PC-9 (cell line): ENCODE measurements at regions of chr13 and their contacts with region 1.

Region 1: DNA sequence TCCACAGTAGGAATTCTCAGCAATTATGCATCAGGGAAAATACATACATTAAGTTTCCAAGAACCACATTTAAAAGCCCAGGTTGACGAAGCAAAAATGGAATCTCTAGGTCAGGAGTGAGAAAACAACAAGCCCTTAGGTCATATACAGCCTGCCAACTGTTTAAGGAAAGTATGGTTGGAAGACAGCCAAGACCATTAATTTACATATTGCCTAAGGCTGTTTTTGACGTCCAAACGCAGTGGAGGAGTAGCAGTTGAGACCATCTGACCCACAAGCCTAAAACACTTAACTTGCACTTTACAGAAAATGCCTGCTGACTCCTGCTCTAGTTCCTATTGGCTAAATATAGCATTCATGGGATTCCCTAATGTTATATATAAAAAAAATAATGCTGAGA is 299.0 kb downstream of the ITGBL1 start:
- DNase-seq: peak; percentile 38 to 89
- H3K4me3 ChIP-seq: no peak overlapping the region
- H3K27ac ChIP-seq: no peak overlapping the region
- H3K4me1 ChIP-seq: peaks cover 16% of the 10 kb centered on the region
- H3K27me3 ChIP-seq: no peaks in the 10 kb centered on the region
- CTCF ChIP-seq: no peak

Region 2: DNA sequence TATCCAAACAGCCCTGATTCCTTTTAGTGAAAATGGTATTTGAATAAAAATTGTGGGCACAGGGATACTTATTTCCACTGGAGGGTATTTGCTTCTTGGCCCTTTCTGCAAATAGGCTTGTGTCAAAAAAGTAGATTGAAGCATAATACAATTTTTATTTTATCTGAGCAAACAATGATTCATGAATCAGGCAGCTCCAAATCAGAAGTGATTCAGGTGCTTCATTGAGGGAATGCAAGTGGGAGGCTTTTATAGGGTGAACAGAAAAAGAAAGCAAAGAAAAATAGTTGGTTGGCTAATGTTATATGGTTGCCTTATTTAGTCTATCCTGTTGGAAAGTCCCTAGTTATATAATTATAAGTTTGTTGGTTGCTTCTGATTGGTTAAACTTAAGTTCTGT is 181.1 kb before region 1 on chr13:
- CTCF ChIA-PET with region 1: no interaction called
- POLR2A ChIA-PET with region 1: no interaction called
- intact Hi-C with region 1: loop called (anchors 5 kb)
- DNase-seq: peak in 1 of 2 experiments; percentile 87
- H3K4me3 ChIP-seq: no peak overlapping the region
- H3K27ac ChIP-seq: peak overlapping the region; percentile 59
- H3K4me1 ChIP-seq: peaks cover 28% of the 10 kb centered on the region
- H3K27me3 ChIP-seq: no peaks in the 10 kb centered on the region
- CTCF ChIP-seq: no peak

Region 3: GRCh38 chr13:101626925-101627555 is 124.4 kb before region 1 on chr13:
- CTCF ChIA-PET with region 1: no interaction called
- POLR2A ChIA-PET with region 1: no interaction called
- intact Hi-C with region 1: loop called (anchors 5 kb)
- DNase-seq: no peak
- H3K4me3 ChIP-seq: no peak overlapping the region
- H3K27ac ChIP-seq: no peak overlapping the region
- H3K4me1 ChIP-seq: peaks cover 50% of the 10 kb centered on the region
- H3K27me3 ChIP-seq: no peaks in the 10 kb centered on the region
- CTCF ChIP-seq: no peak